ENCODE measurements at regions of chr3 and their contacts with region 1.

Region 1: GRCh38 chr3:166013073-166013679 is 176.0 kb upstream of the BCHE start:
- DNase-seq: peak; percentile 18
- H3K4me3 ChIP-seq: no peak overlapping the region
- H3K27ac ChIP-seq: no peak overlapping the region
- H3K4me1 ChIP-seq: no peaks in the 10 kb centered on the region
- H3K27me3 ChIP-seq: no peaks in the 10 kb centered on the region
- CTCF ChIP-seq: peak; percentile 51 to 58

Region 2: DNA sequence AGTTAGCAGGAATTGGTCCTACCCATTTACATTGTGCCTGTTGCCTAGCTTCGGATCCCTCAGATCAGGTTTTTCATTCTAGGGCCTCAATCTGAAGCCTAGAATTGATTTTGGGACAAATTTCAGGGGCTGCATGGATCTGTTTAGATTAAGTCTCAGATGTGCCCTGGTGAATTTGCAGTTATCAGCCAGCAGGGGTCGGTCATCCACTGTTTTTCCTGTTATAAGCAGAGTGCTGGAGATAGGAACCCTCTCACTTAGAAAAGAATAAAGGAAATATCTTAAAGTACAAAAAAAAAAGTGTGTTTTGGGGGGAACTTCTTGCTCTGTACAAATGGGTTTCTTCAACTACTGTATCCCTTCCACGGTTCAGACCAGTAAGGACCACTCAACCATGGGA is 388.4 kb before region 1 on chr3:
- CTCF ChIA-PET with region 1: no interaction called
- dilution Hi-C with region 1: no loop called
- in situ Hi-C with region 1: no loop called
- intact Hi-C with region 1: loop called (anchors 10 kb)
- DNase-seq: no peak
- H3K4me3 ChIP-seq: no peak overlapping the region
- H3K27ac ChIP-seq: no peak overlapping the region
- H3K4me1 ChIP-seq: no peaks in the 10 kb centered on the region
- H3K27me3 ChIP-seq: no peaks in the 10 kb centered on the region
- CTCF ChIP-seq: peak; percentile 60 to 71

Region 3: DNA sequence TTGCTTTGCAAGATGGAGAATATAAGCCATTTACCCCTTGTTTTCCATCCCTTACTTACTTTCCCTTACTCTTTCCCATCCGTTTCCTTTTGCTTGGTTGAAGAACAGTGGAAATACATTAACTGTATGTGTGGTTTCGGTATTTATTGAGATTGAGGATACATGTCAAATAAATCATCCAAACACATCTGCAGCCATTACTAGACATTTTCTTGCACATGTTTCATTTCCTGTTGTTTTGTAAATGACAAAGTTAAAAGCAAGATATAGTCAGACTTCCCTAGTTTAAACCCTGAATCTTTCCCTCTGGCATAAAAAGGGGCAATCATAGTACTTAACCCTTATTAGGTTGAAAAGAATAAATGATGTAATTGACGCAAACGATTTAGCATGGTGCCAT is 93.9 kb before region 1 on chr3:
- CTCF ChIA-PET with region 1: no interaction called
- dilution Hi-C with region 1: no loop called
- in situ Hi-C with region 1: no loop called
- intact Hi-C with region 1: no loop called
- DNase-seq: no peak
- H3K4me3 ChIP-seq: no peak overlapping the region
- H3K27ac ChIP-seq: no peak overlapping the region
- H3K4me1 ChIP-seq: no peaks in the 10 kb centered on the region
- H3K27me3 ChIP-seq: no peaks in the 10 kb centered on the region
- CTCF ChIP-seq: no peak

Region 4: DNA sequence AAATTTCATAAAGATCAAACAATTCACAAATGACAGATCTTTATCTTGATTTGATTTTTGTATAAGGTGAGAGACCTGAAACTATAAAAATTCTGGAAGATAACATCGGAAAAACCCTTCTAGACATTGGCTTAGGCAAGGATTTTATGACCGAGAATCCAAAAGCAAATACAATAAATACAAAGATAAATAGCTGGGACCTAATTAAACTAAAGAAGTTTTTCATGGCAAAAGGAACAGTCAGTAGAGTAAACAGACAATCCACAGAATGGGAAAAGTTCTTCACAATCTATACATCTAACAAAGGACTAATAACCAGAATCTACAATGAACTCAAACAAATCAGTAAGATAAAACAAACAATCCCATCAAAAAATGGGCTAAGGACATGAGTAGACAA is 59.0 kb before region 1 on chr3:
- CTCF ChIA-PET with region 1: no interaction called
- dilution Hi-C with region 1: no loop called
- in situ Hi-C with region 1: no loop called
- intact Hi-C with region 1: no loop called
- DNase-seq: no peak
- H3K4me3 ChIP-seq: no peak overlapping the region
- H3K27ac ChIP-seq: no peak overlapping the region
- H3K4me1 ChIP-seq: no peaks in the 10 kb centered on the region
- H3K27me3 ChIP-seq: no peaks in the 10 kb centered on the region
- CTCF ChIP-seq: no peak

Region 5: GRCh38 chr3:166248784-166249183 is 235.6 kb after region 1 on chr3:
- CTCF ChIA-PET with region 1: no interaction called
- dilution Hi-C with region 1: no loop called
- in situ Hi-C with region 1: no loop called
- intact Hi-C with region 1: no loop called
- DNase-seq: no peak
- H3K4me3 ChIP-seq: no peak overlapping the region
- H3K27ac ChIP-seq: no peak overlapping the region
- H3K4me1 ChIP-seq: no peaks in the 10 kb centered on the region
- H3K27me3 ChIP-seq: no peaks in the 10 kb centered on the region
- CTCF ChIP-seq: no peak

Region 6: GRCh38 chr3:166263455-166263854 is 250.3 kb after region 1 on chr3:
- CTCF ChIA-PET with region 1: no interaction called
- dilution Hi-C with region 1: no loop called
- in situ Hi-C with region 1: no loop called
- intact Hi-C with region 1: loop called (anchors 10 kb)
- DNase-seq: no peak
- H3K4me3 ChIP-seq: no peak overlapping the region
- H3K27ac ChIP-seq: no peak overlapping the region
- H3K4me1 ChIP-seq: no peaks in the 10 kb centered on the region
- H3K27me3 ChIP-seq: no peaks in the 10 kb centered on the region
- CTCF ChIP-seq: peak; percentile 50 to 66

Region 7: GRCh38 chr3:166685246-166685645 is 672.1 kb after region 1 on chr3:
- CTCF ChIA-PET with region 1: no interaction called
- dilution Hi-C with region 1: no loop called
- in situ Hi-C with region 1: no loop called
- intact Hi-C with region 1: loop called (anchors 10 kb)
- DNase-seq: no peak
- H3K4me3 ChIP-seq: no peak overlapping the region
- H3K27ac ChIP-seq: no peak overlapping the region
- H3K4me1 ChIP-seq: no peaks in the 10 kb centered on the region
- H3K27me3 ChIP-seq: no peaks in the 10 kb centered on the region
- CTCF ChIP-seq: peak; percentile 3 to 41

Region 8: GRCh38 chr3:167032261-167032876 is 1019.2 kb after region 1 on chr3:
- CTCF ChIA-PET with region 1: no interaction called
- dilution Hi-C with region 1: no loop called
- in situ Hi-C with region 1: loop called in 1 of 2 experiments (anchors 25 kb)
- intact Hi-C with region 1: loop called (anchors 5 kb)
- DNase-seq: peak; percentile 36
- H3K4me3 ChIP-seq: no peak overlapping the region
- H3K27ac ChIP-seq: no peak overlapping the region
- H3K4me1 ChIP-seq: no peaks in the 10 kb centered on the region
- H3K27me3 ChIP-seq: peaks cover 2% of the 10 kb centered on the region
- CTCF ChIP-seq: peak; percentile 51 to 70

Measured in mammary epithelial cell (primary cell).